Esophagus squamous epithelium (tissue), 5 donors: ENCODE measurements at regions of chr3 and their contacts with region 1.

Region 1: DNA sequence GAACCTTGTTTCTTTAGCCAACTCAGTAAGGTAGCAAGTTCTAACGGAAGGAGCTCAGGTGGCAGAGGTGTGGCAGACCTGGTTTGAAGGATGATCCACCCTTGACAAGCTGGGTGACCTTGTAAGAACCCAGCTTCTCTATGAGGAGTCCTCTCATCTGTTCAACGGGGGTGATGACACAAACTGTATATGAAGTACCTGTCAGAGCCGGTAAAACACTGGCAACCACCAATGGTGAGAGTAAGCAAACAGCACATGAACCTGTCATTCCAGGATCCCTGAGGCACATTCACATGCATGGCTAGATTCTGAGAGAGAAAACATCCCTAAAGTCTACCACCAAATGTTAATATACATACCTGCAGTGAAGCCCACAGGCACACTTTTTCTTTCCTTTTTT is 2.4 kb downstream of the SCAP start:
- DNase-seq: no peak
- H3K4me3 ChIP-seq: no peak overlapping the region
- H3K27ac ChIP-seq: peak overlapping the region in 2 of 4 donors; percentile 27 to 83
- H3K4me1 ChIP-seq: peaks cover 16 to 53% (median 24%) of the 10 kb centered on the region in 3 donors
- H3K27me3 ChIP-seq: no peaks in the 10 kb centered on the region
- CTCF ChIP-seq: no peak
- POLR2A ChIP-seq: no peak

Region 2: DNA sequence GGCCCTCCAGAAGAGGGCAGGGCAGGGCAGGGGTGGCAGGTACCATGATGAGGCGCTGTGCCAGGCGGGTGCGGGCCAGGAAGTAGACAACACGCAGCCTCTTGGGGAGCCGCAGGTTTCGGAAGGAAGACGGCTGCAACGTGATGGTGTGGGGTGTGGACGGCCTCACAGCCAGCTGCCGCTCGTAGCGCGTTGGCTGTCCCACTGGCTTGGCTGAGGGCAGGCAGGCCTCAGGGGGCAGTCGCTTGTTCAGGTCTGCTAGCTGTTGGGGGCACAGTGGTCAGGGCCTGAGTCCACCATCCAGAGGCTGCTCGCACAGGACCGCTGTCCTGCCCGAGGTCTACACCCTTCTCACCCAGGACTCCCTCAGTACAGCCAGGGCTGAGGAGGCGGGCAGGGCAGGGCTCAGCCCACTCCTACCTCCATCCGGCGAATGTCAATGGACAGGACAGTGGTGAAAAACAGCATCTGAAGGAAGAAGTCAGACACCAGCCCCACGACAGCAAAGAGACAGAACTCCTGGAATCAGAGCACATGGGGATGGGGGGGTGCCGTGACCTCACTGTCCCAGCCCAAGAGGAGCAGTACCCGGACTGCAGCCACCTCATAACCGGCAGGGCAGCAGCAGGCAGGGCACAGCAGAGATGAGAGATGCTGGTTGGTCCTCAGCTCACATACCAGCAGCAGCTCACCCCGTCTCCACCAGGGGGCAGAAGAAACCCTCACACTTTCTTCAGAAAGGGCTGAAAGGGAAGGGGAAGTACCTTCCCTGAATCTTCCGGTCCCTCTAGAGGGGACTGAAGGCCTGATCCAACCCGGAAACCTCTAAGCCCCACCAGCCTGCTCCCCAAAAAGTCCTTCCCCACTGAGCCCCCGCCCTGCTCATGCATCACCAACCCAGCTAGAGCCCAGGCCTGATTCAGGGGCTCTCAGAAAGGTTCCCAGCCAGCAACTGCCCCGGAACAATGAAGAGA is 52.6 kb before region 1 on chr3:
- intact Hi-C with region 1: loop called (anchors 2 kb)
- DNase-seq: peak; percentile 25
- H3K4me3 ChIP-seq: no peak overlapping the region
- H3K27ac ChIP-seq: peak overlapping the region; percentile 65 to 80 (median 76)
- H3K4me1 ChIP-seq: peaks cover 12 to 19% (median 12%) of the 10 kb centered on the region in 3 donors
- H3K27me3 ChIP-seq: no peaks in the 10 kb centered on the region
- CTCF ChIP-seq: peak; percentile 93 to 97 (median 94)
- POLR2A ChIP-seq: no peak